Aorta (tissue), 5 donors: ENCODE measurements at regions of chr22 and their contacts with region 1.

Region 1: DNA sequence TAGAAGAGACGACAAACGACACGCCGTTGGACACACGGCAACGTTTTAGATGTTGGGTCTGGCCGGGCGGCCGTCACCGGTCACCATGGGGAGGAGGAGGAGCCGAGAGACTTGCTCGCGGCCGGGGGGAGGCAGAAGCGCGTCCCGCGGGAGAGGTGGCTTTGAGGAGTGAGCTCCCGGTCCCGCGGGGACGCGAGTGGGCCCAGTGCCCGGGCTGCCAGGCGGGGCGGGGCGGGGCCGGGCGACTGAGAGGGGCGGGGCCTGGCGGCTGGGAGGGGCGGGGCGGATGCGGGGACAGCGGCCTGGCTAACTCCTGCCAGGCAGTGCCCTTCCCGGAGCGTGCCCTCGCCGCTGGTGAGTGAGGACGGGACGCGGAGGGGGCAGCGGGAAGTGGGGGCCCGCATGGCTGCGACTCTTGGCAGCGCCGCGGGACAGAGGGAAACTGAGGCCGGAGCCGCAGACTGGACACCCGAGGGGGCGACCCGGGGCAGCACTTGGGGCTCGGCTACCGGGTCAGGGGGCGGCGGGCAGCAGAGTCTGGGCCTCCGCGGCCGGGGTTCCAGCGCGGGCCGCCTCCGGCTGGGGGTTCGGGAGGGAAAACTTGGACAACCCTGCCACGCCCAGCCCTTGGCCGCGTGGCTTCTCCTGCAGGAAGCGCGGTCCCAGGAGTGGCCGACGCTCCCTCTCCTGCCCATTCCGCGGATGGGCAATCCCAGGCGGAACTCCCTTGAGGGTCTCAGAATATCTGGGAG is at the start of gene TSPO:
- DNase-seq: peak; percentile 91 to 95
- ATAC-seq: peak; percentile 89
- H3K4me3 ChIP-seq: peak within 1 kb of the TSS; percentile 68 to 78
- H3K27ac ChIP-seq: peak within 1 kb of the TSS in 1 of 2 donors; percentile 87
- H3K4me1 ChIP-seq: no peaks in the 10 kb centered on the region
- H3K27me3 ChIP-seq: no peaks in the 10 kb centered on the region
- total RNA-seq, gene TSPO: 88.7 to 120 TPM

Region 2: GRCh38 chr22:43187171-43188099 is 36.0 kb after region 1 on chr22:
- intact Hi-C with region 1: loop called in 1 of 2 experiments (anchors 2 kb)
- DNase-seq: peak; percentile 97 to 99
- ATAC-seq: peak; percentile 95
- H3K4me3 ChIP-seq: peak overlapping the region in 1 of 2 donors; percentile 86
- H3K27ac ChIP-seq: peak overlapping the region; percentile 38 to 96
- H3K4me1 ChIP-seq: no peaks in the 10 kb centered on the region
- H3K27me3 ChIP-seq: no peaks in the 10 kb centered on the region

Region 3: DNA sequence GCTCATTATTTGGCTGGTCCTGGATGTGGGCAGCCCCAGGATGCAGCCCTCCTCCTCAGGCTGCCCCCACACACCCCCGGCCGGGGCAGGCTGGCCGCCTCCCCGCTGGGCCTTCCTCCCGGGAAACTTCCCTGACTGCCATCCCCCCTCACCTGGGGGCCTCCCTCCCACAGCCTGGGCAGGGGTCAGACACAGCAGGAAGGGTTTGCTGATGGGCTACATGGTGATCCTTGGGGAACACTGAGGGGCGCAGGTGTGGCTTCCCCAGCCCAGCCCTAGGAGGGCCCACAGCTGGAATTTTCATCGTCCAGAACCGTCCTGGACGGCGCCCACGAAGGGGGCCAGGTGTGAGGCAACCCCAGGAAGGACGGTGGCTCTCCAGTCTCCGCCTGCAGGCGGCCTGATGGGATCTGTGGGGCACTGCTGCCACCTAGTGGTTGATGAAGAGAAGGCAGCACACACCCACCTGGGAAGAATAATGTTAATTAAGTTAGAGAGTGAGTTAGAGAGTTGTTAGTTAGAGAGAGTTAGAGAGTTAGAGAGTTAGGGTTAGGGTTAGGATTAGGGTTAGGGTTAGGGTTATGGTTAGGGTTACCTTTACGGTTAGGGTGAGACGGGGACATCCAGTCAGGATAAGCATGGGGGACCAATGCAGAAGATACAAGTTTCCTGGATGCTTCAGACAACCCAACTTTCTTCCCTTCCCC is 1474.7 kb after region 1 on chr22:
- intact Hi-C with region 1: no loop called
- DNase-seq: peak; percentile 78 to 88
- ATAC-seq: peak; percentile 79
- H3K4me3 ChIP-seq: no peak overlapping the region
- H3K27ac ChIP-seq: no peak overlapping the region
- H3K4me1 ChIP-seq: no peaks in the 10 kb centered on the region
- H3K27me3 ChIP-seq: no peaks in the 10 kb centered on the region